ENCODE measurements at regions of chr1 and their contacts with region 1.

Region 1: DNA sequence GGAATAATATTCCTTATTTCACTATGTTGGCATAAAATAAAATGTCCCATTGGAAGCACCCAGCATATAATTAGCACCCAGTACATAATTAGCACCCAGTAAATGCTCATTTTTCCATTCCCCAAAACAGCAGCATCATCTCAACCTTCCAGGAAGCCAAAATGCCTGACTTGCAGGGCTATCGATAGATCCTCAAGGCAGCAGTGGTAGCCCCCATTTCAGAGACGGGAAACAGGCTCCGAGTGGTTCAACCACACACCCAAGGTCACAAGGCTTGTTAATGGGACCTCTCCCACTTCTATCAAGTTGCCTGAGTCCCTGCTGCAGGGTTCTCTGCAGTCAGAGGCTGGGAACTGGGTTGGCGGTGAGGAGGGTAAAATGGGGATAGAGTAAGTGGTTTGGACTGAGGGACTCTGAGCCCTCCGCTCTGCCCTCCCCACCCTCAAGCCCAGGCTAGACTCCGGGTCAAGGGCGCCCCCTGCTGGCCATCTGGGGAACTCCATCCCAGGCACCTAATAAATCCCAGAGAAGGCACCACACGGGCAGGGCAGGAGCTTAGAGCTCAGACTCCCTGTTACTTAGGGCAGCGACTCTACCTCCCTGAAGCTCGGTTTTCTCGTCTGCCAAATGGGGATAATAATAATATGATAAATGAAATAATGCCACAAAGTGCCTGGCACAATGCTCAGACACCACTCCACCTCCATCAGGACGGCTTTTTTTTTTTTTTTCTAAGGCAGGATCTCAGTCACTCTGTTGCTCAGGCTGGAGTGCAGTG is 21.9 kb upstream of the LAPTM5 start:
- H3K4me3 ChIP-seq: no peak overlapping the region
- H3K27ac ChIP-seq: no peak overlapping the region
- H3K4me1 ChIP-seq: no peaks in the 10 kb centered on the region
- CTCF ChIP-seq: peak; percentile 88

Region 2: DNA sequence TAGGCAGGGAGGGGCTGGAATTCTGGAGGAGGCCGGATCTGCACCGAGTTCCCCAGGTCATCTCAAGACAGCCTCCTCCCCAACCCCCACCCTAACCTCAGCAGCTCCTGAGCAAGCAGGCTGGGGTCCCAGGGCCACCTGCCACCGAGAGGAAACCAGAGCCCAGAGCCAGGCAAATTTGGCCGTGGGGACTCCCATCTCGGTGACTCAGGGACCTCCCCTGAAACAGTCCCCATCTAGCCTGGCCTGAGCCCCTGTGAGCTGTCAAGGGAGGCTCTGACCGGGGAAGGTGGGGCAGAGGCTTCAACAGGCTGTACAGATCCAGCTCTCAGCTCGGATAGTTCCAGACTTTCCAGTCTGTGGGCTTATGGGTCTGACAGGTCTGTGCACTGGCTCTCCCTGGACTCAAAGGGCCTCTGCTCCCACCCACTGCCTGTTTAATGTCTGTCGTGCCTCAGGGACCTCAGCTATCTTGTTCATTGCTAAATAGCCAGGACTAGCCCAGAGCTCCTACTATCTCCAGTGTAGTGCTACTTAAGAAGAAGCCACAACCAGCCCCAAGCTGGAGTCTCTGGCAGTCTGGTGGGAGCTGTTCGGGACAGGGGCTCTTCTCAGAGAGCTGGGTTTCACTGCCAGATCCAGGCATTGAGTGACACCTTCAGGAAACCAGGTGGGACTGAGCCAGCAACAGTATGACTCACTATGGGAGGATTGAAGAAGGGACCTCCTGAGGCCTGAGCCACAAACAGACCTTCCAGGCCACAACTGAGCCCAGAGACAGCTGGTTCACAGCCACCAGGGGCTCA is 81.7 kb before region 1 on chr1:
- CTCF ChIA-PET with region 1: no interaction called
- POLR2A ChIA-PET with region 1: no interaction called
- H3K4me3 ChIP-seq: no peak overlapping the region
- H3K27ac ChIP-seq: no peak overlapping the region
- H3K4me1 ChIP-seq: no peaks in the 10 kb centered on the region
- CTCF ChIP-seq: no peak

Region 3: DNA sequence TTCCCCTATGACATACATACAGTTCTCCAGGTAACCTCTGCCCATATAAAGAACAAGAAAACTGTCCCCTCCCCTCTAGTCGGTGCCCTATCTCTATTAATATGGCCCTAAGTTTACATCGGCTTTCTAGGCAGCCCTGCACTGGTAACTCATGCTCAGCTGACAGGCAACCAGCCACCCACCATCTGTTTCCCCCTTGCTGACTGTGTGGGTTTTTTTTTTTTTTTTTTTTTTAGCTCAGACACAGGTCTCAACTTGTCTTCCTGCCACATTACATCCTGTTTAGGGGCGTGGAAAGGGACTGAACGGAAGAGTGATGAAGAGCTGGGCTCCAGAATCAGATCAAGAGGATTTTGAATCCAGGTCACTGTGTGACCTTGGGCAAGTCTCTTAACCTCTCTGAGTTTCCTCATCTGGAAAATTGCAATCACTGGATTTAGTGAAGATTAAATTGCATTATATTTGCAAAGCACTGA is 35.9 kb before region 1 on chr1:
- CTCF ChIA-PET with region 1: interaction called, 10 read pairs
- POLR2A ChIA-PET with region 1: no interaction called
- H3K4me3 ChIP-seq: no peak overlapping the region
- H3K27ac ChIP-seq: no peak overlapping the region
- H3K4me1 ChIP-seq: no peaks in the 10 kb centered on the region
- CTCF ChIP-seq: no peak

Region 4: DNA sequence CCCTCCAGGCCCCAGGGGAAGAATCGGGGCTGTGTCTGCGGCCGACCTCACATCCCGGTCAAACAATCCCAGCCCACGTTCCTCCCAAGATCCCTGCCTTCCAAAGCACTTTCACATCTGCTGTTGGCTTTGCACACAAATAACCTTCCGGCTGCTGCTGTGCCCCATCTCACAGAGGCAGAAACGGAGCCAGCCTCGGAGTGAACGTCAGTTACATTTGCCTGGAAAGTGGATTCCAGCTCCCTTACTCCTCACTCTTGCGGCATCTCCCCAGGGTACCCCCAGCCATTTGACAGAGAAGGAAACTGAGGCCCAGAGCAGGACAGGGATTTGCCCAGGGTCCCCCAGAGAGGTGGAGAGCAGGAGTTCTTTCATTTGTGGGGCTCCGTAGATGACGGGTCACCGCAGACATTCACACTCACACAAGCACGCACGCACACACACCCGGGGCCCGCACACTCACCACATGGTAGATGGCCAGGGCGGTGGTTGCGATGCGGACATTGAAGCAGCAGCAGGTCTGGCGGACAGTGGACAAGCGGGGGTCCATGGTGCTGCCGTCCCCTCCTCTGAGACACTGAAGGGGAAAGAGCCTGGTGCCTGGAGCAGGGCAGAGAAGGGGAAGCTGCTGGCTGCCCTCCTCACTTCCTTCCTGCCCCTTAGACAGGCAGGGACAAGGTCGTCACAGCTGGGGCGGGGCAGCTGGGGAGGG is 22.1 kb before region 1 on chr1 and contains the start of gene LAPTM5:
- CTCF ChIA-PET with region 1: interaction called, 12 read pairs
- POLR2A ChIA-PET with region 1: no interaction called
- H3K4me3 ChIP-seq: no peak within 1 kb of the TSS
- H3K27ac ChIP-seq: no peak within 1 kb of the TSS
- H3K4me1 ChIP-seq: no peaks in the 10 kb centered on the region
- CTCF ChIP-seq: no peak

Region 5: GRCh38 chr1:30905912-30906605 is 126.6 kb after region 1 on chr1:
- CTCF ChIA-PET with region 1: interaction called, 231 read pairs
- POLR2A ChIA-PET with region 1: interaction called, 3 read pairs
- H3K4me3 ChIP-seq: no peak overlapping the region
- H3K27ac ChIP-seq: no peak overlapping the region
- H3K4me1 ChIP-seq: peaks cover 8% of the 10 kb centered on the region; the same call in 1 of the 2 replicates
- CTCF ChIP-seq: no peak

Region 6: GRCh38 chr1:30919025-30919881 is 139.8 kb after region 1 on chr1:
- CTCF ChIA-PET with region 1: interaction called, 231 read pairs
- POLR2A ChIA-PET with region 1: interaction called, 5 read pairs
- H3K4me3 ChIP-seq: no peak overlapping the region
- H3K27ac ChIP-seq: no peak overlapping the region
- H3K4me1 ChIP-seq: peaks cover 3% of the 10 kb centered on the region; the same call in 1 of the 2 replicates
- CTCF ChIP-seq: no peak